ENCODE measurements at regions of chr4 and their contacts with region 1.

Region 1: DNA sequence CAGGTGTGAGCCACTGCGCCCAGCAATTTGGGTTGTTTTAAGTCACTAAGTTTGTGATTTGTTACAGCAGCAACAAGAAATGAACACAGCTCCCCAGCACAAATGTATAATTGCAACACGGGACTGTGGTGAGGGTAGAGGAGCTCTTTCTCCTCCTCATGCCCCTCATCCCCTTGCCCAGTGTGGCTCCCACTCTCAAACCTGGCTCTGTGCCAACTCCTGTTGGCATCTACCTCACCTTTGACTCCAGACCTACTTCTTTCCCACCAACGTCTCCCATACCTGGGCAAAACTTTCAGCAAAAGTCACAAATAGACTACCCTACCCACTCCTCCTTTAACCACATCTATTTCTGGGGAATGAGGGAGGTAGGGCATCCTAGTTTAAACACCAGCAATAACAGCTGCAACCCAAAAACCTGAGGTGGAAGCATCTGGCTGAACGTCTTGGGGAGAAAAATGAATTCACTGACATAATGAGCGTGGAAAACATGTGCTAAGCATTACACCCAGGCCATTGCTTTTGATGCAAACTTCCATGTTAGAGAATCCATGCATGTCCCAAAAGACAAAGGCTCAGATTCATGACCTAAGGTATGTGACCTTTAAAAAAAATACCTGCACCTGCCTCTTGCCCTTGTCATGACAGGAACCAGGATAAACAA is 19.2 kb downstream of the LNX1 start:
- DNase-seq: no peak
- H3K4me3 ChIP-seq: no peak overlapping the region
- CTCF ChIP-seq: no peak
- POLR2A ChIP-seq: no peak

Region 2: DNA sequence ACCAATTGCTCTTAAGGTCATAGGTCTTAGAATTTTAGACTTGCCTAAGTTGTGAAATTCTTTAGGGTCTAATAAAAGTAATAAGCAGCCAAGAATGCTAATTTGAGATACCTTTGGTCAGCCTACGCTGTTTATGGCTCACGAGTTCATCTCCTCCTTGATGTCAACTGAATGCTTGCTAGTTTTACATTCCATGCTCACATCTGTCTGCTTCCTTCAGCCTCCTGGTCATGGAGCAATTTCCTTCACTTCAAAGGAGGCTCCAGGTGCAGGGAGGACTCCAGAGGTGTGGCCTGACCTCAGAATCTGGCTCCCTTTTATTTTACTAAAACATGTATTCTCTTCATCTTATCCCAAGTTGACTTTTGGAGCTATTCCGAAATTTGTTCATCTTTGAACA is 42.5 kb after region 1 on chr4:
- intact Hi-C with region 1: loop called (anchors 1 kb)
- DNase-seq: no peak
- H3K4me3 ChIP-seq: no peak overlapping the region
- CTCF ChIP-seq: no peak
- POLR2A ChIP-seq: no peak

Measured in lower leg skin (tissue), 4 donors.